MCF 10A (cell line): ENCODE measurements at regions of chr9 and their contacts with region 1.

Region 1: DNA sequence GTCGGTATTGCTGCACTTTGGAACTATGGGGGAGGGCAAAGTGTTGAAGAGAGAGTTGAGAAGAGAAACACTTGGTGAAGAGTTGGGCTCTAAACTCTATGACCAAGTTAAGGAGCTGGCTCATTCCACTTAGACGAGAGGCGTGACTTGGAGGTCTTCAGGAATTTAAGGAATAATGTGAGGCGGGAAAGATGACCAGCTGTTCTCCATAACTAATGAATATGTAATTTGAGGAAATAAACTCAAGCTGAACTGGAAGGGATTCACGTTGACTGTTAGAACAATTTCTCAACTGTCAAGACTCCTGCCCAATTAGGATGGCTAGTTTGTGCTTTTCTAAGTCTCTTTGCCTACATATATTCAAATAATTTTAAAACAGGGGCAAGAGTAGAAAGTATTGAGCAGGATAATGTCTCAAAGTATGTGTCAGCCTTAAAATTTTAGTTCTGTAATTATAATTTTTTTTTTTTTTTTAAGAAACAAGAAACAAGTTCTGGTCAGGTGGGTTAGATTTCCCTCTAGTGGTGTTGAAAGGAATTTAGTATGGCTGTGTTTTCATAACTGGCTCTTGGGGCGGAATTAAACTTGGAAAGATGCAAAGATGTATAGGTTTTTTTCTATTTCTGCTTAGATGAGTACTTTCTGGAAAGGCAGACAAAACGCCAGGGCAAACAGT is 33.4 kb downstream of the TMEM252 start:
- DNase-seq: peak; percentile 36
- H3K4me3 Mint-ChIP-seq: no peak overlapping the region
- H3K27ac Mint-ChIP-seq: no peak overlapping the region
- H3K4me1 Mint-ChIP-seq: no peaks in the 10 kb centered on the region
- H3K27me3 Mint-ChIP-seq: no peaks in the 10 kb centered on the region
- CTCF ChIP-seq: peak; percentile 63

Region 2: DNA sequence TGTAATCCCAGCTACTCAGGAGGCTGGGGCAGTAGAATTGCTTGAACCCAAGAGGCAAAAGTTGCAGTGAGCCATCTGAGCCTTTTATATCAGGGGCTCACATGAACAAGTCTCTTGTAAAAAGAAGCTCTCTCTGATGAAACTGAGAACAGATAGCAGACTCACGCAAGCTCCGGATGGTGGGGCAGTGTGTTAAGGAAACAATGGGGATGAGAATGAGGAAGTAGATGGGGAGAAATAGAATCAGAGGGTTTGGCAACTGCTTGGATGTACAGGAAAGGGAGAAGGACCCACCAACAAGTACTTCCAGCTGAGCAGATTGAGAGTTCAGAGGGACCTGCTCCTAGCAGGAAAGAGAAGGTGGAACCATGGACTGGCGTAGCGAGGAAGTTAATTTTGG is 14.9 kb after region 1 on chr9:
- CTCF ChIA-PET with region 1: interaction called, 24 read pairs
- POLR2A ChIA-PET with region 1: no interaction called
- intact Hi-C with region 1: no loop called
- DNase-seq: no peak
- H3K4me3 Mint-ChIP-seq: no peak overlapping the region
- H3K27ac Mint-ChIP-seq: no peak overlapping the region
- H3K4me1 Mint-ChIP-seq: no peaks in the 10 kb centered on the region
- H3K27me3 Mint-ChIP-seq: no peaks in the 10 kb centered on the region
- CTCF ChIP-seq: no peak

Region 3: DNA sequence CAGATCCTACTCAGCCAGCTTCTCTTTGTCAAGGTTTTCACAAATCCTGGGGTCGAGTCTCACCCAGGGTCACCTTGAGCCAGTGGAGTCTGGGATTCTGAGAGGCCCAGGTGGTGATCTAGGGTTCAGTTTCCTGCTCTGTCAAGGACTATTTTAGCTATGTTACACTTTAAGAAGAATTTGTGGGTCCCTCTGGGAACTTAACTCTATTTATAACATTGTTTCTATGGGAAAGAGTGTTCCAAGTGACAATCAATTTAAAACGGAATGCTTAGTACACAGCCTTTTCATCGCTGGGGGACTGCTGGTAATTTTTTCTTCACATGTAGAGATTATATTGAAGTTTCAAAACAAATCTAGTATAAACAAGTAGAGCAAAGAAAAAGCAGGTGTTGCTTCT is 60.3 kb after region 1 on chr9:
- CTCF ChIA-PET with region 1: interaction called, 25 read pairs
- POLR2A ChIA-PET with region 1: no interaction called
- intact Hi-C with region 1: loop called (anchors 5 kb)
- DNase-seq: no peak
- H3K4me3 Mint-ChIP-seq: no peak overlapping the region
- H3K27ac Mint-ChIP-seq: no peak overlapping the region
- H3K4me1 Mint-ChIP-seq: no peaks in the 10 kb centered on the region
- H3K27me3 Mint-ChIP-seq: peaks cover 30% of the 10 kb centered on the region
- CTCF ChIP-seq: no peak

Region 4: GRCh38 chr9:68574150-68574549 is 66.9 kb after region 1 on chr9:
- CTCF ChIA-PET with region 1: interaction called, 25 read pairs
- POLR2A ChIA-PET with region 1: no interaction called
- intact Hi-C with region 1: loop called (anchors 5 kb)
- DNase-seq: no peak
- H3K4me3 Mint-ChIP-seq: no peak overlapping the region
- H3K27ac Mint-ChIP-seq: no peak overlapping the region
- H3K4me1 Mint-ChIP-seq: no peaks in the 10 kb centered on the region
- H3K27me3 Mint-ChIP-seq: peaks cover 78% of the 10 kb centered on the region
- CTCF ChIP-seq: peak; percentile 13

Region 5: GRCh38 chr9:68999393-69000105 is 492.3 kb after region 1 on chr9:
- CTCF ChIA-PET with region 1: interaction called, 4 read pairs
- POLR2A ChIA-PET with region 1: no interaction called
- intact Hi-C with region 1: loop called (anchors 1 kb)
- DNase-seq: peak; percentile 77
- H3K4me3 Mint-ChIP-seq: no peak overlapping the region
- H3K27ac Mint-ChIP-seq: peak overlapping the region; percentile 84
- H3K4me1 Mint-ChIP-seq: peaks cover 1% of the 10 kb centered on the region
- H3K27me3 Mint-ChIP-seq: peaks cover 80% of the 10 kb centered on the region
- CTCF ChIP-seq: peak; percentile 61

Region 6: GRCh38 chr9:69288119-69288518 is 780.9 kb after region 1 on chr9:
- CTCF ChIA-PET with region 1: no interaction called
- POLR2A ChIA-PET with region 1: no interaction called
- intact Hi-C with region 1: no loop called
- DNase-seq: no peak
- H3K4me3 Mint-ChIP-seq: no peak overlapping the region
- H3K27ac Mint-ChIP-seq: no peak overlapping the region
- H3K4me1 Mint-ChIP-seq: no peaks in the 10 kb centered on the region
- H3K27me3 Mint-ChIP-seq: peaks cover 52% of the 10 kb centered on the region
- CTCF ChIP-seq: no peak